Endothelial cell of umbilical vein (primary cell): ENCODE measurements at regions of chr2 and their contacts with region 1.

Region 1: DNA sequence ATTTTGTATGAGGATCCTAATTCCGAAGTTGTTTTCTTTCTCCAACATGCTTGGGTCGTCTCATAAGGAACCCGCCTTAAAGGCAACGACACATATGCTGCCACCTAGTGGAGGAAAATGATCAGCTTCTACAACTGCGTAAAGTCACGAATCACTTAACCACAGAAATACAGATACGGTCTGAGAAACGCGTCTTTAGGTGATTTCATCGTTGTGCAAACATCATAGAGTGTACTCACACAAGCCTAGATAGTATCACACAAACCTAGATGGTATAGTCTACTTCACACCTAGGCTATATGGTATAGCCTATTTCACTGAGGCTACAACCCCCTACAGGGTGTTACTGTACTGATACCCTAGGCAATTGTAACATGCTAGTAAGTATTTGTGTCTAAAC is 13.1 kb downstream of the GNLY start:
- DNase-seq: peak; percentile 81
- H3K4me3 ChIP-seq: no peak overlapping the region
- H3K27ac ChIP-seq: no peak overlapping the region
- H3K4me1 ChIP-seq: peaks cover 18% of the 10 kb centered on the region
- H3K27me3 ChIP-seq: no peaks in the 10 kb centered on the region
- CTCF ChIP-seq: peak; percentile 77 to 87
- POLR2A ChIP-seq: no peak

Region 2: DNA sequence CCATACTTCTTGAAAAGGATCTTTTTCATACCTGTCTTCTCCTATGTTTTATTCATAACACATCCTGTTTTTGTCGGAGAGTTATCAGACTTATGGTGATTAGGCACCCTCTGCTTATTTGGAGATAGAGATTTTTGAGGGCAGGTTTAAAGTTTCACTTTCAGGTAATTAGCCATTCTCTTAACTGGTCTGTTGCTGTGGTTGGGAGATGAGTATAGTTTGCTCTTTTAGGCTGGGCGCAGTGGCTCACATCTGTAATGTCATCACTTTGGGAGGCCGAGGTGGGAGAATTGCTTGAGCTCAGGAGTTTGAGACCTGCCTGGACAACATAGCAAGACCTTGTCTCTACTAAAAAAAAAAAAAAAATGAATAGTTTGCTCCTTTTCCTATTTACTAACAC is 64.6 kb before region 1 on chr2:
- CTCF ChIA-PET with region 1: interaction called, 138 read pairs
- POLR2A ChIA-PET with region 1: no interaction called
- dilution Hi-C with region 1: no loop called
- intact Hi-C with region 1: loop called (anchors 1 kb)
- DNase-seq: no peak
- H3K4me3 ChIP-seq: no peak overlapping the region
- H3K27ac ChIP-seq: no peak overlapping the region
- H3K4me1 ChIP-seq: no peaks in the 10 kb centered on the region
- H3K27me3 ChIP-seq: no peaks in the 10 kb centered on the region
- CTCF ChIP-seq: no peak
- POLR2A ChIP-seq: no peak

Region 3: GRCh38 chr2:85662899-85663593 is 44.3 kb before region 1 on chr2:
- CTCF ChIA-PET with region 1: interaction called, 12 read pairs
- POLR2A ChIA-PET with region 1: no interaction called
- dilution Hi-C with region 1: no loop called
- intact Hi-C with region 1: no loop called
- DNase-seq: peak; percentile 90
- H3K4me3 ChIP-seq: no peak overlapping the region
- H3K27ac ChIP-seq: no peak overlapping the region
- H3K4me1 ChIP-seq: peaks cover 23% of the 10 kb centered on the region
- H3K27me3 ChIP-seq: no peaks in the 10 kb centered on the region
- CTCF ChIP-seq: no peak
- POLR2A ChIP-seq: no peak

Region 4: GRCh38 chr2:85684806-85685205 is 22.5 kb before region 1 on chr2:
- CTCF ChIA-PET with region 1: interaction called, 103 read pairs
- POLR2A ChIA-PET with region 1: no interaction called
- dilution Hi-C with region 1: no loop called
- intact Hi-C with region 1: no loop called
- DNase-seq: no peak
- H3K4me3 ChIP-seq: no peak overlapping the region
- H3K27ac ChIP-seq: no peak overlapping the region
- H3K4me1 ChIP-seq: peaks cover 11% of the 10 kb centered on the region
- H3K27me3 ChIP-seq: peaks cover 0 to 2% of the 10 kb centered on the region in 2 experiments
- CTCF ChIP-seq: no peak
- POLR2A ChIP-seq: no peak

Region 5: GRCh38 chr2:85723707-85724360 is 16.5 kb after region 1 on chr2:
- CTCF ChIA-PET with region 1: interaction called, 24 read pairs
- POLR2A ChIA-PET with region 1: no interaction called
- dilution Hi-C with region 1: no loop called
- intact Hi-C with region 1: no loop called
- DNase-seq: no peak
- H3K4me3 ChIP-seq: no peak overlapping the region
- H3K27ac ChIP-seq: no peak overlapping the region
- H3K4me1 ChIP-seq: no peaks in the 10 kb centered on the region
- H3K27me3 ChIP-seq: peaks cover 0 to 8% of the 10 kb centered on the region in 2 experiments
- CTCF ChIP-seq: no peak
- POLR2A ChIP-seq: no peak